CD8-positive, alpha-beta T cell (primary cell): ENCODE measurements at regions of chr6 and their contacts with region 1.

Region 1: DNA sequence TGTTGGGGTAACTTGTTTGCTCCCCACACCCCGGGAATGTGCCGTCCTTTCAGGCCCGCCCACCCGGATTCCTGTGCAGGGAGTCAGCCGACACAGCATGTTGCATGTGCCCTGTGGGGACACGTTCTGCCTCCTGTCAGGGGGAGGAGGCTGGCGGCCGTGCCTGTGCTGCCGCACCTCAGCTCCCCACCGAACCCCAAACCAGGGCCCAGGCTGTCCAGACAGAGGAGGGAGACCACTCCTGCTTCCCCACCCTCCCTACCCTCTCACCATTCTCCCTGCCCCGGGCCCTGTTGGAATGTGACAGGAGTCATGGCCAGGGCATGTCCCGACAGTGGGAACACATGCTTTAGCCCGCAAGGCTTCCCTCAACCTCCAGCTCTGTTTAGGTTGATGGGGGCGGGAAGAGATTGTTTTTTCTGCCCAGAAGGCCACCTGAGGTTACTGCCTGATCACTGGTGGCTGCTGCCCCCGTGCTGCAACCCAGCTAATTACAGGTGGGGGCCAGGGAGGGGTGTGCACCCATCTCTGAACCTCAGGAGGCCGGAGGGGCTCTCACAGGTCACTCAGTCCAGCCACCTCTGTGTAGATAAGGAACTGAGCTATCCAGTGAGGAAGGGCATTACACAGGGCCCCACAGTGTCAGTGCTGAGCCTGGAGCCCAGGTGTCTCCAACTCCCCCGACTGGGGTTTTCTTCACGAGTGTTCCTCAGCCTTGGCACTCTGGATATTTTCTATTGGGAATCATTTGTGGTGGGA is 13.6 kb downstream of the LRRC73 start:
- DNase-seq: peak in 3 of 9 experiments; percentile 23 to 42 (median 35)
- ATAC-seq: peak; percentile 44
- H3K4me3 ChIP-seq: no peak overlapping the region
- H3K4me3 Mint-ChIP-seq: no peak overlapping the region
- H3K27ac ChIP-seq: no peak overlapping the region
- H3K27ac Mint-ChIP-seq: no peak overlapping the region
- H3K4me1 ChIP-seq: peaks cover 15% of the 10 kb centered on the region
- H3K4me1 Mint-ChIP-seq: peaks cover 27% of the 10 kb centered on the region
- H3K27me3 ChIP-seq: no peaks in the 10 kb centered on the region
- H3K27me3 Mint-ChIP-seq: no peaks in the 10 kb centered on the region
- CTCF ChIP-seq: no peak

Region 2: GRCh38 chr6:43454696-43455530 is 41.6 kb before region 1 on chr6:
- CTCF ChIA-PET with region 1: interaction called, 18 read pairs
- POLR2A ChIA-PET with region 1: interaction called, 5 read pairs
- intact Hi-C with region 1: no loop called
- DNase-seq: peak in 7 of 9 experiments; percentile 17 to 69 (median 39)
- ATAC-seq: peak; percentile 51
- H3K4me3 ChIP-seq: peak overlapping the region; percentile 57 to 73
- H3K4me3 Mint-ChIP-seq: peak overlapping the region; percentile 82
- H3K27ac ChIP-seq: no peak overlapping the region
- H3K27ac Mint-ChIP-seq: peak overlapping the region; percentile 41
- H3K4me1 ChIP-seq: peaks cover 7% of the 10 kb centered on the region
- H3K4me1 Mint-ChIP-seq: peaks cover 15% of the 10 kb centered on the region
- H3K27me3 ChIP-seq: no peaks in the 10 kb centered on the region
- H3K27me3 Mint-ChIP-seq: no peaks in the 10 kb centered on the region
- CTCF ChIP-seq: peak; percentile 41

Region 3: GRCh38 chr6:43644931-43645612 is 148.5 kb after region 1 on chr6 and contains the start of gene RSPH9:
- CTCF ChIA-PET with region 1: no interaction called
- POLR2A ChIA-PET with region 1: no interaction called
- intact Hi-C with region 1: no loop called
- DNase-seq: peak in 8 of 9 experiments; percentile 33 to 70 (median 64)
- ATAC-seq: peak; percentile 85
- H3K4me3 ChIP-seq: peak within 1 kb of the TSS; percentile 37 to 38
- H3K4me3 Mint-ChIP-seq: peak within 1 kb of the TSS; percentile 75
- H3K27ac ChIP-seq: no peak within 1 kb of the TSS
- H3K27ac Mint-ChIP-seq: peak within 1 kb of the TSS; percentile 11
- H3K4me1 ChIP-seq: peaks cover 4% of the 10 kb centered on the region
- H3K4me1 Mint-ChIP-seq: peaks cover 36% of the 10 kb centered on the region
- H3K27me3 ChIP-seq: no peaks in the 10 kb centered on the region
- H3K27me3 Mint-ChIP-seq: no peaks in the 10 kb centered on the region
- CTCF ChIP-seq: no peak
- total RNA-seq, gene RSPH9: not detected